Colonic mucosa (tissue), 4 donors: ENCODE measurements at regions of chr16 and their contacts with region 1.

Region 1: DNA sequence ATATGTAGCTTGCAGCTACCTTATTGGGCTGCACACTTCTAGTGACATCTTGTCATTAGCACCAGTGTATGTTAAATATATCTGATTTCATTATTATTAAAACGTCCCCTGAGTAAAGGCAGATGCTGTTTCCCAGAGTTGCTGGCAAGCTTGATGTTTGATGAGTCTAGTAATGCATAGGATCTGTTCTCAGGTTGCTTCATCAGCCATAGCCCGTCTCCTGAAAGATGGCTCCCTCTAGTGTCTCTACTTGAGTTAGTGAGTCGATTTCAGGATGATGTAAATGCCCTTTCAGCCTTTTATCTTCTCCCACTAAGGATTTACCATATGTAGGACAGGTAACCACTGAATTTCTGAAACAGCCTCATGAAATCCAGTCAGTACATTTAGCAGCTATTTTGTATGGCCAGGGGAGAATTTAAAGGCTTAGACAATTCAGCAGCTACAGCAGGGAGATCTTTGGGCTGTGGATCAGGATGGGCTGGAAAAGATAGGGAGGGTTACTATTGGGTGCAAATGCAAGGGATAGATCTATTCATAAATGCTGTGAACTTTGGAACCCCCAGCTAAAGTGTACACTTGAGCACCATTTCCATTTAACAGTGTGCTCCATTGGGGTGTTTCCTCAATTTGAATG is 376.3 kb downstream of the CNTNAP4 start:
- DNase-seq: no peak
- H3K4me3 ChIP-seq: no peak overlapping the region
- H3K27ac ChIP-seq: no peak overlapping the region
- H3K4me1 ChIP-seq: no peaks in the 10 kb centered on the region
- H3K27me3 ChIP-seq: no peaks in the 10 kb centered on the region
- CTCF ChIP-seq: no peak

Region 2: DNA sequence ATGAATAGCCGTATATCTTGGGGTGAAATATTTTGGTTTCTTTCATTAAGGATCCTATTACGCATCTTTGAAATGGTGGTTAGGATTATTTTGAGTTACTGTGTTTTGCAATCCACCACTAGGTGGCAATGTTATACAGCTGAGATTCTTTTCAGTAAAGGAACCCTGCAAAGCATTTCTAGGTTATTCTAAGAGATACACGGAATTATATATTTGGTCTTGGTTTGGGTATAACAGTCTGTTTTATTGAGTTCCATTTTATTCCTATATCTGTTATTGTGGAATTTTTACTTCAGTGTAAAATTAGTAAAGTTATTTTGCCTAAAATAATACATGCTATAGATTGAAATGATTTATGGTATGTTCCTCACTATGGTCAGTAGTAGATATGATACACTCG is 864.3 kb before region 1 on chr16:
- intact Hi-C with region 1: loop called (anchors 5 kb)
- DNase-seq: no peak
- H3K4me3 ChIP-seq: no peak overlapping the region
- H3K27ac ChIP-seq: no peak overlapping the region
- H3K4me1 ChIP-seq: no peaks in the 10 kb centered on the region
- H3K27me3 ChIP-seq: no peaks in the 10 kb centered on the region
- CTCF ChIP-seq: peak; percentile 84